IMR-90 (cell line): ENCODE measurements at regions of chr19 and their contacts with region 1.

Region 1: DNA sequence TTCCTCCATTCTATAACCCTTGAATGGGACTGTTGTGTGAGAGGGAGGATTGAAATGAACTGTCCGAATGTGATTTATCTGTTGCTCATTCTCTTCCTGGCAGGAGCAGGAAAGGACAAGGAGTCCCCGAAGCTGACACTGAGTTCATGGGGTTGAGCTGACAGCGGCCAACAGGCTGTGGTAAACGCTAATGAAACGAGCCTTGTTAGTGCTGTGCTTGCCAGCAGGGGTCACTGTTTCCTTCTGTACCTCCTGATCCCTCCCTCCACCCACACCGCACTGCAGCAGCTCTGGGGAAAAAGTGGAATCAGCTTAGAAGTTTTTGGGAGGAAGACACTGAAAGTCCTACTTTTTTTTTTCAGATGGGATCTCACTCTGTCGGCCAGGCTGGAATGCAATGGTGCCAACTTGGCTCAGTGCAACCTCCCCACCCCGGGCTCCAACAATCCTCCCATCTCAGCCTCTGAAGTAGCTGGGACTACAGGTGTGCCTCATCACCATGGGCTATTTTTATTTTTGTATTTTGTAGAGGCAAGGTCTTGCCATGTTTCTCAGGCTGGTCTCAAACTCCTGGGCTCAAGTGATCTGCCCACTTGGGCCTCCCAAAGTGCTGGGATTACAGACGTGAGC is 6.7 kb upstream of the ZNF761 start:
- DNase-seq: peak; percentile 65
- ATAC-seq: peak; percentile 94
- H3K4me3 ChIP-seq: no peak overlapping the region
- H3K27ac ChIP-seq: no peak overlapping the region
- H3K4me1 ChIP-seq: no peaks in the 10 kb centered on the region
- H3K27me3 ChIP-seq: no peaks in the 10 kb centered on the region
- CTCF ChIP-seq: peak; percentile 78
- POLR2A ChIP-seq: no peak
- RAD21 ChIP-seq: peak; percentile 71

Region 2: GRCh38 chr19:53485046-53486004 is 60.2 kb after region 1 on chr19:
- CTCF ChIA-PET with region 1: no interaction called
- POLR2A ChIA-PET with region 1: no interaction called
- dilution Hi-C with region 1: no loop called
- in situ Hi-C with region 1: no loop called
- intact Hi-C with region 1: no loop called
- DNase-seq: no peak
- ATAC-seq: no peak
- H3K4me3 ChIP-seq: no peak overlapping the region
- H3K27ac ChIP-seq: no peak overlapping the region
- H3K4me1 ChIP-seq: no peaks in the 10 kb centered on the region
- H3K27me3 ChIP-seq: no peaks in the 10 kb centered on the region
- CTCF ChIP-seq: no peak
- POLR2A ChIP-seq: no peak
- RAD21 ChIP-seq: no peak

Region 3: GRCh38 chr19:53511933-53512374 is 86.9 kb after region 1 on chr19:
- CTCF ChIA-PET with region 1: interaction called, 4 read pairs
- POLR2A ChIA-PET with region 1: no interaction called
- dilution Hi-C with region 1: no loop called
- in situ Hi-C with region 1: no loop called
- intact Hi-C with region 1: loop called (anchors 1 kb)
- DNase-seq: peak; percentile 65
- ATAC-seq: peak; percentile 95
- H3K4me3 ChIP-seq: no peak overlapping the region
- H3K27ac ChIP-seq: no peak overlapping the region
- H3K4me1 ChIP-seq: peaks cover 5% of the 10 kb centered on the region
- H3K27me3 ChIP-seq: no peaks in the 10 kb centered on the region
- CTCF ChIP-seq: peak; percentile 66
- POLR2A ChIP-seq: no peak
- RAD21 ChIP-seq: peak; percentile 47

Region 4: GRCh38 chr19:53772943-53773342 is 347.9 kb after region 1 on chr19:
- CTCF ChIA-PET with region 1: no interaction called
- POLR2A ChIA-PET with region 1: no interaction called
- dilution Hi-C with region 1: no loop called
- in situ Hi-C with region 1: no loop called
- intact Hi-C with region 1: no loop called
- DNase-seq: peak; percentile 47
- ATAC-seq: peak; percentile 84
- H3K4me3 ChIP-seq: no peak overlapping the region
- H3K27ac ChIP-seq: no peak overlapping the region
- H3K4me1 ChIP-seq: no peaks in the 10 kb centered on the region
- H3K27me3 ChIP-seq: no peaks in the 10 kb centered on the region
- CTCF ChIP-seq: peak; percentile 45
- POLR2A ChIP-seq: no peak
- RAD21 ChIP-seq: peak; percentile 41; the same call in 1 of the 2 replicates